Activated CD4-positive, alpha-beta memory T cell treated with anti-CD3 and anti-CD28 coated beads for 36 hours (primary cell): ENCODE measurements at regions of chr5 and their contacts with region 1.

Region 1: GRCh38 chr5:849651-850301 is 1.0 kb downstream of the ZDHHC11 start:
- DNase-seq: no peak
- H3K4me3 Mint-ChIP-seq: no peak overlapping the region
- H3K27ac Mint-ChIP-seq: no peak overlapping the region
- H3K4me1 Mint-ChIP-seq: peaks cover 7% of the 10 kb centered on the region
- H3K27me3 Mint-ChIP-seq: peaks cover 1% of the 10 kb centered on the region

Region 2: DNA sequence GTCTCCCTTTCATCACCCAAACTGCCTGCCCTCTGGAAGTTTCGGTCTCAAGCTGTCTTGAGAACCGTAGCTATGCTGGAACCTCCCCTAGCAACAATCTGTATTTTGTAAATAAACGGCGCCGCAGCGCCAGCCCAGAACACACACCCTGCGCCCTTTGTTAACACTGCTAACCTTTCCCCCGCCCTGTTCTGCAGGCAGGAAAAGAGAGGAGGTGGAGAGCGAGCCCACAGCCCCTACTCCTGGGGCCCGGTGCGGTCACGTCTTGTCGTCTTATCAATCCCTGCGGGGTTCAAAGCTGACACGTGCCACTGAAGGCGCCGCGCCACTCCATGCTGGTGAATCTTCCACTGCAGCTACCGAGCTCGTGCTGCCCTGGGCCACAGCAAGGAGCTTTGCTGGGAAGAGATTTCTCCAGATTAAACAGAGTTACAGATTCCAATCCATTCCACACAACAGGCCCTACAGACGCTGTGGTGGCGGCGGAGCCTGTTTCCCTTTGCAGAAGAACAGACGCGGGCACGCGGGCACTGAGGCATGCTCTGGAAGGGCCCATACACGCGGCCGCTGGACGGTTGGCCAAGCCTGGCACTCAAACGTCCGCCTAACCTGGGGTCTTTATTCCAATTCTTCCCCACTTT is 90.5 kb before region 1 on chr5:
- CTCF ChIA-PET with region 1: no interaction called
- POLR2A ChIA-PET with region 1: no interaction called
- intact Hi-C with region 1: loop called (anchors 2 kb)
- DNase-seq: peak; percentile 64
- H3K4me3 Mint-ChIP-seq: no peak overlapping the region
- H3K27ac Mint-ChIP-seq: no peak overlapping the region
- H3K4me1 Mint-ChIP-seq: peaks cover 20% of the 10 kb centered on the region
- H3K27me3 Mint-ChIP-seq: no peaks in the 10 kb centered on the region